Vagina (tissue), 2 donors: ENCODE measurements at regions of chr17 and their contacts with region 1.

Region 1: DNA sequence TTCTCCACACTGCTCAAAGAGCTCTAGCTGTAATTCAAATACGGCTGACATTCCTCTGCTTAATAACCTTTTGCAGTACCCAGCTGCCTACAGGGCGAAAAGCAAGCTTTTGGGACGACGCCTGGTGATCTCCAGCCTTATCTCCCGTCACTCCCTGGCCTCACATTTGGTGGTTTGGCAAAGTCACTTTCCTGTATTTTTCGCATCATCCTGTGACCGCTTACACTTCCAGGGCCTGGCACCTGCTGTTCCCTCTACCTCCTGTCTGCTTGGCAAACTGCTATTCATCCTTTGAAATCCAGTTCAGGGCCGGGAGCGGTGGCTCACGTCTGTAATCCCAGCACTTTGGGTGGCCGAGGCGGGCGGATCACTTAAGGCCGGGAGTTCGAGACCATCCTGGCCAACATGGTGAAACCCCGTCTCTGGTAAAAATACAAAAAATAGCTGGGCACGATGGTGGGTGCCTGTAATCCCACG is 2.7 kb upstream of the BHLHA9 start:
- DNase-seq: no peak
- H3K4me3 ChIP-seq: peak overlapping the region; percentile 55 to 94
- H3K27ac ChIP-seq: peak overlapping the region; percentile 79
- H3K4me1 ChIP-seq: peaks cover 21% of the 10 kb centered on the region
- H3K27me3 ChIP-seq: no peaks in the 10 kb centered on the region
- CTCF ChIP-seq: no peak
- POLR2A ChIP-seq: no peak

Region 2: GRCh38 chr17:1516388-1517161 is 249.1 kb after region 1 on chr17 and contains the start of gene INPP5K:
- intact Hi-C with region 1: loop called (anchors 5 kb)
- DNase-seq: peak in 1 of 2 donors; percentile 99
- H3K4me3 ChIP-seq: peak within 1 kb of the TSS; percentile 85 to 89
- H3K27ac ChIP-seq: peak within 1 kb of the TSS; percentile 93
- H3K4me1 ChIP-seq: peaks cover 56% of the 10 kb centered on the region
- H3K27me3 ChIP-seq: no peaks in the 10 kb centered on the region
- CTCF ChIP-seq: peak in 2 of 3 experiments; percentile 17 to 23
- POLR2A ChIP-seq: peak in 1 of 2 donors; percentile 42
- total RNA-seq, gene INPP5K: 96.0 TPM